GM12878 (cell line): ENCODE measurements at regions of chr4 and their contacts with region 1.

Region 1: DNA sequence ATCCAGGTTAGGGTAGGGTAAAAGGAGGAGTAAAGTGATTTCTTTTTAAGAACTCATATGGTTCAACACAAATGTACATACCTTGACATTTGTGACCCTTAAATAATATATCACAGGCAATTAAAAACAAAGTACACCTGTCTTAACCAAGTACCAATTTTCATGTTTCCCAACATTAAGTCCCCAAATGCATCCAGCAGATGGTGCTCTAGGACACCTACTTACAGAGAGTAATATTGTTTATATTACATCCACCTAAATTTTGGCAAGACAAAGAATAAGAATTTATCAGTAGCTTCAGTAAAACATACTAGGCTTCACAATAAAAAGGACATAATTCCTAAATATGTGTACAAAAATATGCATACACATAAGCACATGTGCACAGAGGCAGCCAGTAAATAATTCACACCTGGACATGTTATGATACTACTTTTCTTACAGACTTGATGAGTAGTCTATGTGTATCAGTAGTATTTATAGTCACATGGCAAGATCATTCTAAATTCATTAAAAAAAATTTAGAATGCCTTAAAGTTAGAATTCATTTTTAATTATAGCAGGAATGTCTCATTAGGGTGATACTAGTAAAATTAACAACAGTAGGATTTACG is 219.7 kb downstream of the DCLK2 start:
- DNase-seq: peak; percentile 8
- ATAC-seq: peak; percentile 75
- H3K4me3 ChIP-seq: no peak overlapping the region
- H3K27ac ChIP-seq: no peak overlapping the region
- H3K4me1 ChIP-seq: no peaks in the 10 kb centered on the region
- H3K27me3 ChIP-seq: no peaks in the 10 kb centered on the region
- CTCF ChIP-seq: peak; percentile 49 to 64 (median 54)
- EP300 ChIP-seq: no peak
- POLR2A ChIP-seq: no peak
- RAD21 ChIP-seq: peak; percentile 84

Region 2: GRCh38 chr4:150337734-150338133 is 39.8 kb after region 1 on chr4:
- CTCF ChIA-PET with region 1: no interaction called
- POLR2A ChIA-PET with region 1: no interaction called
- RAD21 ChIA-PET with region 1: no interaction called
- SMC1A ChIA-PET with region 1: no interaction called
- in situ Hi-C with region 1: no loop called
- intact Hi-C with region 1: no loop called
- DNase-seq: no peak
- ATAC-seq: no peak
- H3K4me3 ChIP-seq: no peak overlapping the region
- H3K27ac ChIP-seq: no peak overlapping the region
- H3K4me1 ChIP-seq: no peaks in the 10 kb centered on the region
- H3K27me3 ChIP-seq: no peaks in the 10 kb centered on the region
- CTCF ChIP-seq: no peak
- EP300 ChIP-seq: no peak
- POLR2A ChIP-seq: no peak
- RAD21 ChIP-seq: no peak

Region 3: DNA sequence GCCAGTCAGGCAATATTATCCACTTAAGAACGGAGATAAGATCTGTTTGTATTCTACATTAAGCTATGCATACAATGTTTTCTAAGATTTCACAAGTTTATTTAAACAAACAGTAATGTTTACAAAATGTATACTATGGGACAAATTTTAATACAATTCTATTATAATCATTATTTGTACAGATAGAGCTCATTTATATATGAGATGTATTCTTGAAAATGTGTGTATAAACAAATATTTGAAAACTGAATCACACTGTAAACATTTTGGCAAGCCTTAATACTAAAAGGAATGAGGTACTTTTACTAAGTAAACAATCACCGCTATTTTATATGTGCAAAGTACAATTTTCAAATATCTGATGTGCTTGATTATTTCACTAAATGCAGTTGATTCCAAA is 164.8 kb after region 1 on chr4:
- CTCF ChIA-PET with region 1: no interaction called
- POLR2A ChIA-PET with region 1: no interaction called
- RAD21 ChIA-PET with region 1: no interaction called
- SMC1A ChIA-PET with region 1: no interaction called
- in situ Hi-C with region 1: no loop called
- intact Hi-C with region 1: no loop called
- DNase-seq: no peak
- ATAC-seq: no peak
- H3K4me3 ChIP-seq: no peak overlapping the region
- H3K27ac ChIP-seq: no peak overlapping the region
- H3K4me1 ChIP-seq: no peaks in the 10 kb centered on the region
- H3K27me3 ChIP-seq: no peaks in the 10 kb centered on the region
- CTCF ChIP-seq: no peak
- EP300 ChIP-seq: no peak
- POLR2A ChIP-seq: no peak
- RAD21 ChIP-seq: no peak

Region 4: DNA sequence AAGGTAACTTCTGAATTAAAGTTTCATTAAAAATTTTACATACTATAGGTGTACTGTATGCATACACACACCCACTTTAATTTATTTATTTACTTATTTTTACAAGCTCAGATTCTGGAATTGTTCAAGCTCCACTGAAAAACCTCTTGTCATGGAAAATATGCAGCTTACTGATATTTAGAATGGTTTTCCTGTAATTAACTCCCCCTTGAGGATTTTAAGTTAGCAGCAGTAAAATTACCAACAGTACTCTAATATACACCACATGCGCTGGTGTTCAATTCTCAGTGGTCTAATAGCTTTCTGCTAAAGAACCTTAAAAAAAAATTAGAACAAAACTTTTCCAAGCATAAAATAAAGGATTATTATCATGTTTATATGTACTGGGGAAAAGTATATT is 296.0 kb after region 1 on chr4:
- CTCF ChIA-PET with region 1: interaction called, 4 read pairs
- POLR2A ChIA-PET with region 1: no interaction called
- RAD21 ChIA-PET with region 1: interaction called, 5 read pairs
- SMC1A ChIA-PET with region 1: interaction called, 4 read pairs
- in situ Hi-C with region 1: no loop called
- intact Hi-C with region 1: loop called (anchors 10 kb)
- DNase-seq: no peak
- ATAC-seq: no peak
- H3K4me3 ChIP-seq: no peak overlapping the region
- H3K27ac ChIP-seq: no peak overlapping the region
- H3K4me1 ChIP-seq: no peaks in the 10 kb centered on the region
- H3K27me3 ChIP-seq: no peaks in the 10 kb centered on the region
- CTCF ChIP-seq: no peak; a peak in 1 of 6 replicates
- EP300 ChIP-seq: no peak
- POLR2A ChIP-seq: no peak
- RAD21 ChIP-seq: no peak

Region 5: DNA sequence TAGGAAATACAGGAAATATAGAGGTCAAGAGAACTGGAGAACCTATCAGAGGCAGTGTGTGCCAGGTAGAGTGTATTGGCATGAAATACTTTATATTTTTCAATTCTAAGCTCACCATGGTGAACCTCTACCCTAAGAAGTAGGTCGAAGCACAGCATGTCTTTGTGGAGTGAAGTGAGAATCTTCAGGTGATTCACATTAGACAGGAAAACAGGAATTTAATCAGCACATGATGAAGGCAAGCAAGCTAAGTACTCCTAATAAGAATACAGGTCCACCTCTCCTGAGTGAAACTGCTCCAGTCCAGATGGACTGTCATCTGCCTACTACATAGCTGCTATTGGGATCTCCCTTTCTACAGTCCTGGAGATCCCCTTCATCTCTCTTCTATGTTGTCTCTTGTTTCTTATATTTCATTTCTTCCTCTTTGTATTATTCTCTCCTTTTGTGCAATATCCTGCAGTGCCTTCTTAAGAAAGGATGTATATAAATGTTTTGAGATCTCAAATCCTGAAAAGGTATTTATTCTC is 558.1 kb after region 1 on chr4:
- CTCF ChIA-PET with region 1: interaction called, 3 read pairs
- POLR2A ChIA-PET with region 1: no interaction called
- RAD21 ChIA-PET with region 1: no interaction called
- SMC1A ChIA-PET with region 1: interaction called, 11 read pairs
- in situ Hi-C with region 1: no loop called
- intact Hi-C with region 1: no loop called
- DNase-seq: no peak
- ATAC-seq: peak; percentile 89
- H3K4me3 ChIP-seq: no peak overlapping the region
- H3K27ac ChIP-seq: no peak overlapping the region
- H3K4me1 ChIP-seq: no peaks in the 10 kb centered on the region
- H3K27me3 ChIP-seq: no peaks in the 10 kb centered on the region
- CTCF ChIP-seq: no peak
- EP300 ChIP-seq: no peak
- POLR2A ChIP-seq: no peak
- RAD21 ChIP-seq: no peak

Region 6: DNA sequence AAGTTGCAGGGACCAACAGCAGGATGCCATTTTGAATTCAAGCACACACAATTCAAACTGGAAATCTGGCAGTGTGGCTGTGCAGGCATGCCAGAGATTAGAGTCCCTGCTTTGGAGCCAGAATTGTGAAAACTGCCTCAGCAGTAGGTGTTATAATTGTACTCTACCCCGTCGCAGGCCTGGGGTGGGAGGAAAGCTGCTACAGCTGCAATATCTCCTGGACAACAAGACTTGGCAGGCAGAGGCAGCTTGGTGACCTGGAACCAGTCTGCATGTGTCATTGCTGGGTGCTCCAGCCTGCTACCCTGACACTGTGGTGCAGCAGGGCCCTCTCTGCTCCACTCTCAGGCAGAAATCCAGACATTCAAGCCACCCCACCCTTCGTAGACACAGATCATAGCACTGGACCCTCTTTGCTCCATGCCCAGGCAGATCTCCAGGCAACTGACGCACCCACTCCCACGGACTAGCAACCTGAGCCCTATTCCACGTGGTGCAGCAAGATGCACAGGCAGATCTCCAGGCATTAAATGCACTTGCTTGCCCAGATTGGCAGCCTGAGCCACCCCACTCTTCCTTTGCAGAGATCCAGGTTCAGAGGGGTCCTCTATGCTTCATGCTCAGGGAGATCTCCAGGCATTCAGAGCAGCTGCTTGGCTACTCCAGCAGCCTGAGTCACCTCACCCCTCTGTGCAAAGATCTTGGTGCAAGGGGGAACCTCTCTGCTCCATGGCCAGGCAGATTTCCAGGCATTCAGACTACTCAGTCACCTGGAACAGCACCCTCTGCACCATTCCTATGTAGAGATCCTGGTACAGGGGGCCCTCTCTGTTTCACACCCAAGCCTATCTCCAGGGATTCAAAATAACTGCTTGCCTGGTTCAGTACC is 576.6 kb after region 1 on chr4:
- CTCF ChIA-PET with region 1: interaction called, 107 read pairs
- POLR2A ChIA-PET with region 1: no interaction called
- RAD21 ChIA-PET with region 1: no interaction called
- SMC1A ChIA-PET with region 1: interaction called, 47 read pairs
- in situ Hi-C with region 1: loop called (anchors 5 kb)
- intact Hi-C with region 1: no loop called
- DNase-seq: no peak
- ATAC-seq: no peak; the same call in 2 of the 3 replicates
- H3K4me3 ChIP-seq: no peak overlapping the region
- H3K27ac ChIP-seq: no peak overlapping the region
- H3K4me1 ChIP-seq: no peaks in the 10 kb centered on the region
- H3K27me3 ChIP-seq: no peaks in the 10 kb centered on the region
- CTCF ChIP-seq: no peak
- EP300 ChIP-seq: no peak
- POLR2A ChIP-seq: no peak
- RAD21 ChIP-seq: no peak